H1 (cell line): ENCODE measurements at regions of chr11 and their contacts with region 1.

Region 1: DNA sequence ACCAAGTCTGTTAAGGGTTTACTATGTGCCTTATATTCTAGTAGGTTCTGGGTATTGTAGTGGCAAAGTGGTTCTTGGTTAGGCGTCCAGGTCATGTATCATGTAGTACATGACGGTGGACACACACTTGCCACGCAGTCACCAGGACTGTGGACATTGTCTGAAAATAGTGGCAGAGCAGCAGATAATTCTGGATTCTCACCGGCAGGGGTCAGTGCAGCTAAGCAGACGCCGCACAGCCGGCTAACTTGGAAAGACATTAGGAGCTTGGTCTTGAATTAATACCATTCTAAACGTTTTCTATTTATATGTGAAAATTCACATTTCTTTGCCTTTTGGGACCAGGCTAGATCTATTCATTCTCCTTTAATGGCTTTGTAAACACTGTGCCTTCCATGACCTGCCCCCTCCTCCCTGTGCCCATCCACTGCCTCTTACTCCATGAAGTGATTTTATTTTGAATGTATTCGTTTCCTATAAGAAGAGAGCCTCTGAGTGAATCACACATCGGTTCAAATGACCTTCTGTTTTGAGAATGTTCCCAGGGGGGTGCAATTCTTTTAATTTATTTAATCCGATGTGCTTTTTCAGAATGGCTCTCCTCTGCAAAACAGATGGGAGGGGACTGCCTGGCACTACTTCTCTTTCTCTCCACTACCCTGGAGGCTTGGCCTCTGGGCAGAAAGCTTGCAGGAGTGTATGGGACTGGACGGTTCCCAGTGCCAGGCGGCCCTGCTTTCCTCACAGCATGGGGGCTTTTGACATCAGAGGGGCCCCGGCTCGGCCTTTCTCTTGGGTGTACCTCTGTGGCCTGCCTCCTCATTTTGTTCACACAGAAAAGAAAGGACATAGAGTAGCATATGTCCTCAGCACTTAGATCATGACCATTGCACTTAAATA is 378.0 kb downstream of the NTM start:
- DNase-seq: peak in 1 of 2 experiments; percentile 83
- H3K4me3 ChIP-seq: no peak overlapping the region
- H3K27ac ChIP-seq: no peak overlapping the region
- H3K4me1 ChIP-seq: peaks cover 0 to 2% (median 0%) of the 10 kb centered on the region in 4 experiments; a peak in 2 of 7 replicates
- H3K27me3 ChIP-seq: no peaks in the 10 kb centered on the region
- CTCF ChIP-seq: peak; percentile 76 to 89 (median 82)
- EP300 ChIP-seq: no peak
- POLR2A ChIP-seq: no peak
- RAD21 ChIP-seq: peak; percentile 87 to 88

Region 2: DNA sequence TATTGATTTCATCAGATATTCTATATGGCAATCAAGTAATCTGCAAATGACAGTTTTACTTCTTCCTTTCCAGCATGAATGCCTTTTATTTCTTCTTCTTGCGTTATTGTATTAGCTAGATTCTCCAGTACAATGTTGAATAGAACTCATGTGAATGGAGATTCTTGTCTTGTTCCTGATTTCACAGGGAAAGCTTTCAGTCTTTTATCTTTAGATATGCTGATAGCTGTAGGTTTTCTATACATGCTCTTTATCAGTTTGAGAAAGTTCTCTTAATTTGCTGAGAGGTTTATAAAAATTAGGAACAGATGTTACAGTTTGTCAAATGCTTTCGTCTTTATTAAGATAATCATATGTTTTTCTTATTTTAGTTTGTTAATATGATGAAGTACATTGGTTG is 30.8 kb before region 1 on chr11:
- CTCF ChIA-PET with region 1: interaction called, 14 read pairs
- POLR2A ChIA-PET with region 1: no interaction called
- DNase-seq: no peak
- H3K4me3 ChIP-seq: no peak overlapping the region
- H3K27ac ChIP-seq: no peak overlapping the region
- H3K4me1 ChIP-seq: no peaks in the 10 kb centered on the region
- H3K27me3 ChIP-seq: no peaks in the 10 kb centered on the region
- CTCF ChIP-seq: no peak
- EP300 ChIP-seq: no peak
- POLR2A ChIP-seq: no peak
- RAD21 ChIP-seq: no peak

Region 3: GRCh38 chr11:131760091-131761061 is 12.0 kb after region 1 on chr11:
- CTCF ChIA-PET with region 1: interaction called, 74 read pairs
- POLR2A ChIA-PET with region 1: no interaction called
- DNase-seq: peak in 1 of 2 experiments; percentile 63
- H3K4me3 ChIP-seq: no peak overlapping the region
- H3K27ac ChIP-seq: no peak overlapping the region
- H3K4me1 ChIP-seq: peaks cover 0 to 5% (median 0%) of the 10 kb centered on the region in 4 experiments; a peak in 2 of 7 replicates
- H3K27me3 ChIP-seq: no peaks in the 10 kb centered on the region
- CTCF ChIP-seq: peak; percentile 1 to 28 (median 20); a peak in 3 of 4 replicates
- EP300 ChIP-seq: no peak
- POLR2A ChIP-seq: no peak
- RAD21 ChIP-seq: peak; percentile 15 to 37; a peak in 3 of 4 replicates

Region 4: DNA sequence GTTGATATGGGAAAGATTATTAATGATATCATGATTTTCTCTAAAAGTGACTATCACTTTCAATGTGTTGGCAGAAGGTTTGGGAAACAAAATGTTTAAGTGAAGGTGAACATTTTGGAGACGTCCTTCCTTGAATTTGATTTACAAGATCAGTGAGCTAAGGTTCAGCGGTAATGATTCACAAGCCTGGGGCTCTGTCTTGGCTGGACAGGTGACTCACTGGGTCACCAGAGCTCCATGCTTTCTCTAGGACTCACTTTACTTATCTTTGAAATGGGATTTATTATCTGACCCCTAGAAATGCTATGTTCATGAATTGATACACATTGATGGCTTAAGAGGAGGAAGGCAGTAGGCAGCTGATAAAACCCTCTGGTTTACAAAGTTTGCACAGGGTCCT is 59.5 kb after region 1 on chr11:
- CTCF ChIA-PET with region 1: interaction called, 15 read pairs
- POLR2A ChIA-PET with region 1: no interaction called
- DNase-seq: no peak
- H3K4me3 ChIP-seq: no peak overlapping the region
- H3K27ac ChIP-seq: no peak overlapping the region
- H3K4me1 ChIP-seq: peaks cover 0 to 6% (median 4%) of the 10 kb centered on the region in 4 experiments; a peak in 3 of 7 replicates
- H3K27me3 ChIP-seq: no peaks in the 10 kb centered on the region
- CTCF ChIP-seq: no peak
- EP300 ChIP-seq: no peak
- POLR2A ChIP-seq: no peak
- RAD21 ChIP-seq: no peak

Region 5: DNA sequence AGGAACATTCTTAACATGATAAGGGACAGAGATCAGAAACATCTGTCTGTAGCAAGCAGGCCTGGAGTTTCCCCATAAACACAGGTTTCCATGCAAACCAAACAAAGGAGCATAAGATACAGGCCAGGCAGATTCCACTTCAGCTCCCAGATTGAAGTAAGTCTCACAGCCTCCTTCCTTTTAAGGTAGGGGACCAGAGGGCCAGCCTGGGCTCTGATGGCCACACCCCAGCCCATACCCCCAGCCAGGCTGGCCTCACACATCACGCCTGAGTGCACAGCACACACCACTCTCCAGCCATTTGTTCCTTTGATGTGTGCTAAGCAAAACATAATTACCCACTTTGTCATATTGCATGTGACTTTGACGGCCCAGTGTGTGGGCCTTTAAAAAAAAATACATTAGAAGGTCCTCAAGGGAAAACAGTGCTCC is 140.8 kb after region 1 on chr11:
- CTCF ChIA-PET with region 1: interaction called, 57 read pairs
- POLR2A ChIA-PET with region 1: no interaction called
- DNase-seq: no peak
- H3K4me3 ChIP-seq: peak overlapping the region in 1 of 4 experiments; percentile 24; a peak in 1 of 8 replicates
- H3K27ac ChIP-seq: peak overlapping the region; percentile 69
- H3K4me1 ChIP-seq: peaks cover 20 to 36% (median 29%) of the 10 kb centered on the region in 4 experiments
- H3K27me3 ChIP-seq: no peaks in the 10 kb centered on the region
- CTCF ChIP-seq: no peak
- EP300 ChIP-seq: 0 out of 3 replicates have a peak, but pooled peaks of 1 of the 2 experiments have one; percentile 55
- POLR2A ChIP-seq: no peak; a peak in 1 of 3 replicates
- RAD21 ChIP-seq: no peak

Region 6: DNA sequence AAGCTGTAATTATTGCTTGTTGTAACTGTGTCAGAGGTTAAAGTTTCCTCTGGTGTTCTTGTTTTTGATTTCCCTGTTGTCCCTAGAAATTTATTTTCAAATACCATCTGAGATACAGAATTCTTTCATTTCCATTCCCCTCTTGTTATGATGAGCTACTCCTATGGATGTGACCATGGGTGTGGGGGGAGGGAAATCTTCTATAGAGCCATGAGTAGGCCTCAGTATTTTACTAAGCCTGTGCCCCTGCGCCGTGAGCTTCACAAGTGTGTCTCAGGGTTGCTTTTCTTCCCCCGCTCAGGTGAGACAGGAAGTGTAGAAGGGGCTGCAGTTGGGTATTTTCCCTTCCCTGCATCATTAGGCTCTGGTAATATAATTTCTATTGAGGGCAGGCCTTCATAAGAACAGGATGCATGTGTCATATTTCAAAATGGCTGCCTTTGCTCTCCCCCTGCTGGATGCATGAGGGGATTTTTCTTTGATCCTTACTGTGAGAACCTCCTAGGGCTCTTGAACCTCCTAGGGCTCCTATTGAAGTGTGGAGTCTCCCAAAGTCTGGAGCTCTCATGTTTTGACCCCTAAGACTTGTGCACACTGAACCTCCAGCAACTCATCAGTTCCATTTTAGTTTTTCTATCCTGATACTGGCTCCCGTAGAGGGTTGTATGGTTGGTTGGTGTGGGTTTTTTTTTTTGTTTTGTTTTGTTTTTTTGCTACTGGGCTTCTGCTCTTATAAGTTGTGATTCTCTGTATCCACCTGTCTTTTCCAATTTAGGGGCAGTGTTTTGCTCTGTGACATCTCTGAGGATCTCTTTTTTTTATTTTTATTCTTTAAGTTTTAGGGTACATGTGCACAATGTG is 280.2 kb after region 1 on chr11:
- CTCF ChIA-PET with region 1: no interaction called
- POLR2A ChIA-PET with region 1: no interaction called
- DNase-seq: no peak
- H3K4me3 ChIP-seq: no peak overlapping the region
- H3K27ac ChIP-seq: no peak overlapping the region
- H3K4me1 ChIP-seq: peaks cover 2 to 8% (median 4%) of the 10 kb centered on the region in 4 experiments; a peak in 4 of 7 replicates
- H3K27me3 ChIP-seq: no peaks in the 10 kb centered on the region
- CTCF ChIP-seq: peak in 2 of 3 experiments; percentile 57 to 61; a peak in 3 of 4 replicates
- EP300 ChIP-seq: no peak
- POLR2A ChIP-seq: no peak
- RAD21 ChIP-seq: peak; percentile 39 to 62

Region 7: GRCh38 chr11:132126973-132127899 is 378.8 kb after region 1 on chr11:
- CTCF ChIA-PET with region 1: interaction called, 12 read pairs
- POLR2A ChIA-PET with region 1: no interaction called
- DNase-seq: no peak
- H3K4me3 ChIP-seq: peak overlapping the region in 2 of 4 experiments; percentile 26 to 50; a peak in 4 of 8 replicates
- H3K27ac ChIP-seq: no peak overlapping the region
- H3K4me1 ChIP-seq: peaks cover 15 to 32% (median 19%) of the 10 kb centered on the region in 4 experiments
- H3K27me3 ChIP-seq: peaks cover 0 to 2% (median 0%) of the 10 kb centered on the region in 4 experiments; a peak in 2 of 7 replicates
- CTCF ChIP-seq: peak; percentile 44 to 83 (median 69)
- EP300 ChIP-seq: no peak
- POLR2A ChIP-seq: no peak
- RAD21 ChIP-seq: peak; percentile 84 to 89